Calu3 (cell line): ENCODE measurements at regions of chr5 and their contacts with region 1.

Region 1: GRCh38 chr5:76771705-76772405 is 47.0 kb upstream of the F2RL1 start:
- DNase-seq: no peak
- H3K4me3 Mint-ChIP-seq: no peak overlapping the region
- H3K27ac Mint-ChIP-seq: no peak overlapping the region
- H3K4me1 Mint-ChIP-seq: peaks cover 35% of the 10 kb centered on the region
- H3K27me3 Mint-ChIP-seq: no peaks in the 10 kb centered on the region
- CTCF ChIP-seq: no peak

Region 2: GRCh38 chr5:76513486-76513885 is 258.4 kb before region 1 on chr5:
- CTCF ChIA-PET with region 1: no interaction called
- intact Hi-C with region 1: no loop called
- DNase-seq: no peak
- H3K4me3 Mint-ChIP-seq: no peak overlapping the region
- H3K27ac Mint-ChIP-seq: no peak overlapping the region
- H3K4me1 Mint-ChIP-seq: no peaks in the 10 kb centered on the region
- H3K27me3 Mint-ChIP-seq: peaks cover 17% of the 10 kb centered on the region
- CTCF ChIP-seq: no peak

Region 3: GRCh38 chr5:76601470-76601869 is 170.4 kb before region 1 on chr5:
- CTCF ChIA-PET with region 1: interaction called, 106 read pairs
- intact Hi-C with region 1: loop called (anchors 1 kb)
- DNase-seq: peak; percentile 57
- H3K4me3 Mint-ChIP-seq: no peak overlapping the region
- H3K27ac Mint-ChIP-seq: no peak overlapping the region
- H3K4me1 Mint-ChIP-seq: peaks cover 19% of the 10 kb centered on the region
- H3K27me3 Mint-ChIP-seq: no peaks in the 10 kb centered on the region
- CTCF ChIP-seq: peak; percentile 64

Region 4: GRCh38 chr5:76715736-76716455 is 56.0 kb before region 1 on chr5 and contains the start of gene F2R:
- CTCF ChIA-PET with region 1: no interaction called
- intact Hi-C with region 1: loop called (anchors 5 kb)
- DNase-seq: peak; percentile 62
- H3K4me3 Mint-ChIP-seq: peak within 1 kb of the TSS; percentile 97
- H3K27ac Mint-ChIP-seq: peak within 1 kb of the TSS; percentile 52
- H3K4me1 Mint-ChIP-seq: peaks cover 6% of the 10 kb centered on the region
- H3K27me3 Mint-ChIP-seq: peaks cover 14% of the 10 kb centered on the region
- CTCF ChIP-seq: peak; percentile 77
- total RNA-seq, gene F2R: 13.6 and 14.4 TPM in 2 replicates

Region 5: DNA sequence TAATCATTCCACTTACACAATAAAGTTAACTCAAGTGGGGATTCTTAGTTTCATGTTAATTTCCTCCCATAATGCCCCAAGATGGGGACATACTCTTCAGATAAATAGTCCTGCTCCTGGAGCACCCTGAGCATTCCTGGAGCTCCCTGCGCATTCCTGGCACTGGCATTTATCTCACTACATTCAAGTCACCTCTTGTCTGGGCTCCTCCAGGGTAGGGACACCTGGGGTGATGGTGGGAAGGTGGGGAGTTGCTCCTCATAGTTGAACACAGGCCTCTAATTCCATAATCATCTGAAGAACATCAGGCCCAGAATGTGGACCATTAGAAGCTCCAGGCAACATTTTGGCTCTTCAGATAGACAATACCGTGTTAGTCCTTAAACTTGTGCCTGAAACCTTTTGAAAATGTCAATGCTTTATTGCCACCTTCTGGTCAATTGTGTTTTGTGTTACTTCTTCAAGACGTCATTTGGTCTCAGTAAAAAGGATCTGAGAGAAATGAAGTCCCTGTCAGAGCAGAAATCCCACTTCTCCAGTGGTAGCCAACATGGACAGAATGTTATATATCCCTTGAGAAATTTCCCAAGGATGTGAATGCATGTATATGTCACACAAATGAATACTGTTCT is 244.2 kb after region 1 on chr5:
- CTCF ChIA-PET with region 1: no interaction called
- intact Hi-C with region 1: loop called (anchors 5 kb)
- DNase-seq: no peak
- H3K4me3 Mint-ChIP-seq: no peak overlapping the region
- H3K27ac Mint-ChIP-seq: no peak overlapping the region
- H3K4me1 Mint-ChIP-seq: no peaks in the 10 kb centered on the region
- H3K27me3 Mint-ChIP-seq: no peaks in the 10 kb centered on the region
- CTCF ChIP-seq: peak; percentile 50